Gastrocnemius medialis (tissue), 4 donors: ENCODE measurements at regions of chr10 and their contacts with region 1.

Region 1: DNA sequence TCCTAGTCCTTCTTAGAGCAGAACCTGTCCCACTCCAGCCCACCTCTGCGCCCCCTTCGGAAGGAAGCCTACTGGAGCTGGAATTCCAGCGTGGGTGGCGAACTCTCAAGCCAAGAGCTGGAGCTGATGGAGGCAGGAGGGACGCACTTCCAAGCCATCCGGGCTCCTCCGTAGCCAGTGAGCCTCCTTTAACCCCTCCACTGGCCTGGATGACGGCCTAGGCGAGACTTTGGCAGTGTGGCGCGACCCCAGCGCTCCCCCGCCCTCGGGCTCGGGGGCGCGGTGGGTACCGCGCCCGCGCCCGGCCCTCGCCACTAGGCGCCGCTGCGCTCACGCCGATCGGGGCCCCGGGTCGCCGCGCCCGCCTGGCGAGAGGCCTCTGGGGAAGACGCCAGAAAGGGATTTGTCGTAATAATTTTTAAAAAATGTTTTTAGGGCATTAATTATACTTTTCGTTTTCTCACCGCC is 5.1 kb upstream of the EMX2 start:
- DNase-seq: no peak
- ATAC-seq: peak in 1 of 2 donors; percentile 44
- H3K4me3 ChIP-seq: peak overlapping the region; percentile 7 to 45 (median 37)
- H3K27ac ChIP-seq: peak overlapping the region in 1 of 4 donors; percentile 33
- H3K4me1 ChIP-seq: peaks cover 8 to 20% of the 10 kb centered on the region in 2 donors
- H3K27me3 ChIP-seq: peaks cover 85 to 89% (median 86%) of the 10 kb centered on the region in 3 donors
- CTCF ChIP-seq: peak; percentile 38 to 76 (median 64)
- POLR2A ChIP-seq: no peak

Region 2: DNA sequence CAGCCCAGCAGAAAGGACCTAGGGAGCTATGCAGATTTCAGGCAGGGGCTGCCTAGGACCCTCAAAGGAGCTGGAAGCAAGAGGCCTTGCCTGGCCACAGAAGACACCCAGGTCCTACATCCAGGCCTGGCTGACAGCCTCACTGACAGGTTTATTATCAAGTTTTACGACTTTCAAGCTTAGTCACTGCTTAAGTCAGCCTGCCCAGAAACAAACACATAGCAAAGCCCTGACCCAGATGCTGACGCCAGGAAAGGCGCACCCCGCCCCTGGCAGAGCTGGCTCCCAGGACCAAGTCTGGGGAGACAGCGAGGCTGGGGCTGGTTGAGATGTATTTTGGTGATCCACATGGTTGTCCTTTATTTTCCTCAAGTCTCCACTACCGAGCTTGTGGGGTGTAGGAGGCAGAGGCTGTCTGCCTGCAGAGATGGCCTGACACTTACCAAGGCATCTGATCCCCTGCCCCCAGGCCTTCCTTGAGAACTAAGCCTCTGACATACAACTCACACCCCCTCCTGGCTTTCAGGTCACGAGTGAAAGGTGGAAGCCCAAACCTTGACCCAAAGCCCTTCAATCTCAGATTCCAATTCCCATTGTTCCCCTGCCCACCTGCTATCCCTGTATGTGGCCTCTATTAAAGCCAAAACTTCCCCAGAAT is 75.6 kb before region 1 on chr10:
- in situ Hi-C with region 1: no loop called
- intact Hi-C with region 1: no loop called
- DNase-seq: peak; percentile 15 to 63
- ATAC-seq: peak; percentile 81 to 85
- H3K4me3 ChIP-seq: no peak overlapping the region
- H3K27ac ChIP-seq: peak overlapping the region in 2 of 4 donors; percentile 23 to 33
- H3K4me1 ChIP-seq: no peaks in the 10 kb centered on the region
- H3K27me3 ChIP-seq: no peaks in the 10 kb centered on the region
- CTCF ChIP-seq: no peak
- POLR2A ChIP-seq: no peak

Region 3: GRCh38 chr10:117762819-117763172 is 225.3 kb after region 1 on chr10:
- in situ Hi-C with region 1: no loop called
- intact Hi-C with region 1: loop called (anchors 10 kb)
- DNase-seq: peak in 1 of 2 donors; percentile 43
- ATAC-seq: peak; percentile 9 to 61
- H3K4me3 ChIP-seq: no peak overlapping the region
- H3K27ac ChIP-seq: no peak overlapping the region
- H3K4me1 ChIP-seq: no peaks in the 10 kb centered on the region
- H3K27me3 ChIP-seq: no peaks in the 10 kb centered on the region
- CTCF ChIP-seq: no peak
- POLR2A ChIP-seq: no peak

Region 4: GRCh38 chr10:118241229-118242137 is 704.0 kb after region 1 on chr10:
- in situ Hi-C with region 1: no loop called
- intact Hi-C with region 1: loop called (anchors 1 kb)
- DNase-seq: peak; percentile 37 to 63
- ATAC-seq: peak; percentile 60 to 87
- H3K4me3 ChIP-seq: no peak overlapping the region
- H3K27ac ChIP-seq: no peak overlapping the region
- H3K4me1 ChIP-seq: no peaks in the 10 kb centered on the region
- H3K27me3 ChIP-seq: peaks cover 25 to 48% (median 47%) of the 10 kb centered on the region in 3 donors
- CTCF ChIP-seq: peak; percentile 71 to 93 (median 83)
- POLR2A ChIP-seq: no peak